ENCODE measurements at regions of chr3 and their contacts with region 1.

Region 1: GRCh38 chr3:120137547-120137946 is 43.3 kb upstream of the GSK3B start:
- DNase-seq: no peak
- H3K4me3 ChIP-seq: no peak overlapping the region
- H3K27ac ChIP-seq: no peak overlapping the region
- H3K4me1 ChIP-seq: no peaks in the 10 kb centered on the region
- H3K27me3 ChIP-seq: no peaks in the 10 kb centered on the region
- CTCF ChIP-seq: no peak
- EP300 ChIP-seq: no peak
- POLR2A ChIP-seq: no peak

Region 2: GRCh38 chr3:120331076-120331475 is 193.5 kb after region 1 on chr3:
- intact Hi-C with region 1: no loop called
- DNase-seq: no peak
- H3K4me3 ChIP-seq: no peak overlapping the region
- H3K27ac ChIP-seq: no peak overlapping the region
- H3K4me1 ChIP-seq: no peaks in the 10 kb centered on the region
- H3K27me3 ChIP-seq: no peaks in the 10 kb centered on the region
- CTCF ChIP-seq: no peak
- EP300 ChIP-seq: no peak
- POLR2A ChIP-seq: no peak

Region 3: GRCh38 chr3:121096662-121097352 is 959.3 kb after region 1 on chr3:
- intact Hi-C with region 1: loop called in 1 of 4 experiments (anchors 5 kb)
- DNase-seq: no peak
- H3K4me3 ChIP-seq: no peak overlapping the region
- H3K27ac ChIP-seq: no peak overlapping the region
- H3K4me1 ChIP-seq: no peaks in the 10 kb centered on the region
- H3K27me3 ChIP-seq: no peaks in the 10 kb centered on the region
- CTCF ChIP-seq: no peak
- EP300 ChIP-seq: no peak
- POLR2A ChIP-seq: no peak

Measured in ovary (tissue), 10 donors.